B cell (primary cell): ENCODE measurements at regions of chr1 and their contacts with region 1.

Region 1: GRCh38 chr1:151993654-151994496 is at the start of gene S100A10:
- DNase-seq: peak; percentile 78
- ATAC-seq: peak; percentile 77
- H3K4me3 ChIP-seq: peak within 1 kb of the TSS; percentile 45 to 78 (median 67)
- H3K4me3 Mint-ChIP-seq: peak within 1 kb of the TSS; percentile 94
- H3K27ac ChIP-seq: peak within 1 kb of the TSS; percentile 51 to 73
- H3K27ac Mint-ChIP-seq: peak within 1 kb of the TSS; percentile 93
- H3K4me1 ChIP-seq: peaks cover 13 to 26% of the 10 kb centered on the region in 2 donors
- H3K4me1 Mint-ChIP-seq: peaks cover 30% of the 10 kb centered on the region
- H3K27me3 ChIP-seq: peaks cover 0 to 6% (median 2%) of the 10 kb centered on the region in 4 experiments
- H3K27me3 Mint-ChIP-seq: peaks cover 6% of the 10 kb centered on the region
- CTCF ChIP-seq: no peak
- total RNA-seq, gene S100A10: 40.4 and 47.1 TPM in 2 replicates

Region 2: DNA sequence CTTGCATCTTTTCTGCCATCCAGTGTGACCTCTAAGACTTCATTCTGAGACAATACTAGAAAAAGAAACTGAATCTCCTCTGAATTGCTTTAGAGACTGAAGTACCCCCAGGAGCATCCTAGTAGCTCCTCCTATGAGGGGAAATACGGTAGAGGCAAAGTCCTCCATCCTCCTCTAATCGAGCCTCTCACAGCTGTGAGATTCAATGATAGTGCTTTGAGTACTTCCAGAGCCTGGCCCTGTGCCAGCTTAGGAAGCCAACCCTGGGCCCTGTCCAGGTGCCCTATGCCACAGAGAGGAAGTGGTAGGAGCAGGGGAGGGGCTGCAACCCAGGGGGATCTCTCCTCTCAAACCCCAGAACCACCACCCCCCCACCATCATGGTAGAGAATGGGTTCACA is 172.9 kb before region 1 on chr1:
- CTCF ChIA-PET with region 1: no interaction called
- POLR2A ChIA-PET with region 1: no interaction called
- intact Hi-C with region 1: no loop called
- DNase-seq: no peak
- ATAC-seq: no peak
- H3K4me3 ChIP-seq: no peak overlapping the region
- H3K4me3 Mint-ChIP-seq: no peak overlapping the region
- H3K27ac ChIP-seq: no peak overlapping the region
- H3K27ac Mint-ChIP-seq: no peak overlapping the region
- H3K4me1 ChIP-seq: peaks cover 0 to 5% of the 10 kb centered on the region in 2 donors
- H3K4me1 Mint-ChIP-seq: peaks cover 2% of the 10 kb centered on the region
- H3K27me3 ChIP-seq: peaks cover 0 to 16% (median 0%) of the 10 kb centered on the region in 4 experiments
- H3K27me3 Mint-ChIP-seq: peaks cover 22% of the 10 kb centered on the region
- CTCF ChIP-seq: no peak

Region 3: GRCh38 chr1:151888972-151889570 is 104.8 kb before region 1 on chr1:
- CTCF ChIA-PET with region 1: interaction called, 115 read pairs
- POLR2A ChIA-PET with region 1: no interaction called
- intact Hi-C with region 1: loop called (anchors 1 kb)
- DNase-seq: peak; percentile 48
- ATAC-seq: no peak
- H3K4me3 ChIP-seq: no peak overlapping the region
- H3K4me3 Mint-ChIP-seq: no peak overlapping the region
- H3K27ac ChIP-seq: no peak overlapping the region
- H3K27ac Mint-ChIP-seq: no peak overlapping the region
- H3K4me1 ChIP-seq: peaks cover 6 to 8% of the 10 kb centered on the region in 2 donors
- H3K4me1 Mint-ChIP-seq: peaks cover 7% of the 10 kb centered on the region
- H3K27me3 ChIP-seq: no peaks in the 10 kb centered on the region
- H3K27me3 Mint-ChIP-seq: no peaks in the 10 kb centered on the region
- CTCF ChIP-seq: peak; percentile 68

Region 4: DNA sequence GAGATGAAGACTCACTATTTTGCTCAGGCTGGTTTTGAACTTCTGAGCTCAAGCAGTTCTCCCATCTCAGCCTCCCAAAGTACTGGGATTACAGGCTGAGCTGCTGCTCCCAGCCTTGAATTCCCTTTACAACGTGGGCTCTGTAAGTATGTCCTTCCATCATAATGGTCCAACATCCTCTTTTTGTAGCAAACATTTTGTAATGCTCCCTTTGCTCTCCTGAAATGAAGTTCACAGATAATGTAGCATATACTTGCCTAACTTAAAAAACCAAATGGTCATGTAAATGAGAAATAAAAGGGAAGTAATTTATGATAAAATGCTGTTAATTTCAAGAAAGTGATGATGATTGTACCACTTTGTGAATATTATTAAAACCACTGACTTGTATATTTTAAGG is 54.1 kb before region 1 on chr1:
- CTCF ChIA-PET with region 1: interaction called, 341 read pairs
- POLR2A ChIA-PET with region 1: interaction called, 3 read pairs
- intact Hi-C with region 1: loop called (anchors 1 kb)
- DNase-seq: no peak
- ATAC-seq: no peak
- H3K4me3 ChIP-seq: no peak overlapping the region
- H3K4me3 Mint-ChIP-seq: no peak overlapping the region
- H3K27ac ChIP-seq: no peak overlapping the region
- H3K27ac Mint-ChIP-seq: no peak overlapping the region
- H3K4me1 ChIP-seq: peaks cover 10 to 21% of the 10 kb centered on the region in 2 donors
- H3K4me1 Mint-ChIP-seq: peaks cover 21% of the 10 kb centered on the region
- H3K27me3 ChIP-seq: peaks cover 0 to 3% (median 0%) of the 10 kb centered on the region in 4 experiments
- H3K27me3 Mint-ChIP-seq: peaks cover 9% of the 10 kb centered on the region
- CTCF ChIP-seq: no peak

Region 5: DNA sequence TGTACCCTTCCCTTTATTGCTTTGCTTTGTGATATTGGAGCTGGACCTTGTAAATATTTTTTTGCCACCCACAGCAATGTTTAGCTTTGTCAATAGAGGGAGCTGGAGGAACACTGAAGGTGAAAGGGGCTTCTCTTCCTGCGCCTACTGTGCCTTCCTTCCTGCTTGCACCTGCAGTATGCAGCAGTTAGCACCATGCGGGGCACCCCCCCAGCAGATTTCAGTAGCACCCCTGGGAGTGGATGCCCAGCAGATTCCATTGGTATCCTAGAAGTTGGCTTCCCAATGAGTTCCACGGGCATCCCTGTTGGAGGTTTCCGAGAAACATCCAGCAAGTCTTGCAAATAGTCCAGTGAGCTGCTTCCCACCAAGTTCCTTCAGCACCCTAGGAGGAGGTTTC is 25.8 kb before region 1 on chr1:
- CTCF ChIA-PET with region 1: interaction called, 307 read pairs
- POLR2A ChIA-PET with region 1: no interaction called
- intact Hi-C with region 1: loop called (anchors 1 kb)
- DNase-seq: peak; percentile 76
- ATAC-seq: peak; percentile 78
- H3K4me3 ChIP-seq: no peak overlapping the region
- H3K4me3 Mint-ChIP-seq: no peak overlapping the region
- H3K27ac ChIP-seq: no peak overlapping the region
- H3K27ac Mint-ChIP-seq: no peak overlapping the region
- H3K4me1 ChIP-seq: peaks cover 0 to 7% of the 10 kb centered on the region in 2 donors
- H3K4me1 Mint-ChIP-seq: peaks cover 7% of the 10 kb centered on the region
- H3K27me3 ChIP-seq: peaks cover 0 to 7% (median 4%) of the 10 kb centered on the region in 4 experiments
- H3K27me3 Mint-ChIP-seq: peaks cover 18% of the 10 kb centered on the region
- CTCF ChIP-seq: peak; percentile 79